Endothelial cell of umbilical vein (primary cell): ENCODE measurements at regions of chr13 and their contacts with region 1.

Region 1: DNA sequence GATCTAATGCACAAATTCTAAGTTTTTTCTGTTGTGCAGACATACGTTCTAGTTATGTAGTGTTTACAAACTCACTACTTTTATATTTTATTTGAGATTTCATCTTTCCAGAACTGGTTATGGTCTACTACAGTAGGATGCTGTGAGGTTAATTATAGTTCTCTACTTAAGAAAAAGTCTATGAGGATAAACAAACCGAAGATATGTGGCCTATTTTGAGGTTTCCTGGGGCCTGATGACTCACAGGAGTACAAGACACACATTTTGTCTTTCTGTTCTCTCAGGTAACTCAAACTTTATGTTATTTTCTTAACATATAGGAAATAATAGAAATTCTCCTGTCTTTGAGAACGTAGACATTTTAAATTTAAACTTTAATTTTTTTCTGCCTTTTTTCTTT is 45.1 kb downstream of the PCDH20 start:
- DNase-seq: no peak
- H3K4me3 ChIP-seq: no peak overlapping the region
- H3K27ac ChIP-seq: no peak overlapping the region
- H3K4me1 ChIP-seq: no peaks in the 10 kb centered on the region
- H3K27me3 ChIP-seq: no peaks in the 10 kb centered on the region
- CTCF ChIP-seq: no peak
- POLR2A ChIP-seq: no peak

Region 2: DNA sequence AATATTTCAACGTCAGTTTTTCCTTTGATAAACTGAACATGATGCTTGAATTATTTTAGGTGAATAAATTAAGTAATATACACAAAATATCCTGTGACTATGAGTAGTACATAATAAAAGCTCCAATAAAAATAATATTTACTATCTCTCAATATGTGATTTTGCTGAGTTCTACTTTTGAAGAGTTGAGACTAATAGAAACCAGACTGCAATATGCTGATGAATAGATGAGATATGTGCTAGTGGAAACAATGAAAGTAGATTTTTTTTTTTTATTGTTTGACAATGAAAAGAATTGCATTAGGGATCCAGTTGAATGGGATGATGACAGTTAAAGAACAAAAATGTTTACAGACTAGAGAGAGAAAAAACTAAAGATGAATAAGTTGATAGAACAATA is 61.5 kb after region 1 on chr13:
- CTCF ChIA-PET with region 1: no interaction called
- POLR2A ChIA-PET with region 1: no interaction called
- dilution Hi-C with region 1: no loop called
- intact Hi-C with region 1: loop called (anchors 1 kb)
- DNase-seq: no peak
- H3K4me3 ChIP-seq: no peak overlapping the region
- H3K27ac ChIP-seq: no peak overlapping the region
- H3K4me1 ChIP-seq: no peaks in the 10 kb centered on the region
- H3K27me3 ChIP-seq: no peaks in the 10 kb centered on the region
- CTCF ChIP-seq: no peak
- POLR2A ChIP-seq: no peak